ENCODE measurements at regions of chr6 and their contacts with region 1.

Region 1: DNA sequence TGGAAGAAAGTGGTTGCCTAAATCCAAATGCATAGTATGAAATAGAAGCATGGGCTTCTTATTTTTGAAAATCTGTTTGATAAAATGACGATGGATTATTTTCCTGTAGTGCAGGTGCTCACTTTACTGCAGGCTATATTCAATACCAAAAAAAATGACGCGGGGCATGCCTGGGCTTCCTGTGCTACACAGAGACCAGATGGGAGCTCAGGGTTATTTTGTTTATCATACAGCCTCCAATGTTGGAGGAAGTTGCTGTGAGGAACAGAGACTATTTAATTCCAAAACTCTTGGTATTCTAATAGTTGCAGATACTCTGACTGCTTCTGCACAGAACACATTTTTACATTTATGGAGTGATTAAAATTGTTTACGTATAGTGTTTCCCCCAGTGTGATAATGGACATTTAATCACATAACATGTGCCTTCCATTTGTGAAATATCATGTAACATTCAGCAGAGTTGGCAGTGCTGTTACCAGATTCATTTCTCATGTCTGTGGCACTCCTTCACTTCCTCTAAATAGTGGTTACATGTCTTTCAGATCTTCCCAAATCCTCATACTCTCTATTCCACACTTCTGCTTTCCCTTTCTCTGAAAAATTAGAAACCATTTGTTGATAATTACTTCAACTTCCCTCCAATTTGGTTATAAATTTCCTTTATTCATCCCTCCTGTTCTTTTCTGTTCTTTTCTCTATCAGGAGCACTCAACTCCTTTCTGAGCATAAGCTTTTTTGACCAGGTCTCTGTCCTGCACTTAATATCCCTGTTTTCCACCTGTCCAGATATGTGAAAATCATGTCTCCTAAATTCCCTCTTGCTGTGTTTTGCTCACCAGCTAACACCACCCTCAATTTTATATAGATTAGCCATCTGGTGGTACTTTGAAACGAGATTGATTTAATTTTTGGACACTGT is 121.6 kb downstream of the ADGRB3 start:
- H3K4me3 Mint-ChIP-seq: no peak overlapping the region
- H3K27ac Mint-ChIP-seq: no peak overlapping the region
- H3K4me1 Mint-ChIP-seq: peaks cover 30% of the 10 kb centered on the region
- H3K27me3 Mint-ChIP-seq: peaks cover 2% of the 10 kb centered on the region

Region 2: DNA sequence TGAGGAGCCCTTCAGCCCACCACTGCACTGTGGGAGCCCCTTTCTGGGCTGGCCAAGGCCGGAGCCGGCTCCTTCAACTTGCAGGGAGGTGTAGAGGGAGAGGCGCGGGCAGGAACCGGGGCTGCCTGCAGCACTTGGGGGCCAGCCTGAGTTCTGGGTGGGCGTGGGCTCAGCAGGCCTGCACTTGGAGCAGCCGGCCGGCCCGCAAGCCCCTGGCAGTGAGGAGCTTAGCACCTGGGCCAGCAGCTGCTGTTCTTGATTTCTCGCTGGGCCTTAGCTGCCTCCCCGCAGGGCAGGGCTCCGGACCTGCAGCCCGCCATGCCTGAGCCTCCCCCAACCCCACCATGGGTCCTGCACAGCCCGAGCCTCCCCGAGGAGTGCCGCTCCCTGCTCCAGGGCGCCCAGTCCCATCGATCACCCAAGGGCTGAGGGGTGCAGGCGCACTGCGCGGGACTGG is 223.3 kb before region 1 on chr6:
- intact Hi-C with region 1: no loop called
- H3K4me3 Mint-ChIP-seq: no peak overlapping the region
- H3K27ac Mint-ChIP-seq: no peak overlapping the region
- H3K4me1 Mint-ChIP-seq: no peaks in the 10 kb centered on the region
- H3K27me3 Mint-ChIP-seq: no peaks in the 10 kb centered on the region

Region 3: DNA sequence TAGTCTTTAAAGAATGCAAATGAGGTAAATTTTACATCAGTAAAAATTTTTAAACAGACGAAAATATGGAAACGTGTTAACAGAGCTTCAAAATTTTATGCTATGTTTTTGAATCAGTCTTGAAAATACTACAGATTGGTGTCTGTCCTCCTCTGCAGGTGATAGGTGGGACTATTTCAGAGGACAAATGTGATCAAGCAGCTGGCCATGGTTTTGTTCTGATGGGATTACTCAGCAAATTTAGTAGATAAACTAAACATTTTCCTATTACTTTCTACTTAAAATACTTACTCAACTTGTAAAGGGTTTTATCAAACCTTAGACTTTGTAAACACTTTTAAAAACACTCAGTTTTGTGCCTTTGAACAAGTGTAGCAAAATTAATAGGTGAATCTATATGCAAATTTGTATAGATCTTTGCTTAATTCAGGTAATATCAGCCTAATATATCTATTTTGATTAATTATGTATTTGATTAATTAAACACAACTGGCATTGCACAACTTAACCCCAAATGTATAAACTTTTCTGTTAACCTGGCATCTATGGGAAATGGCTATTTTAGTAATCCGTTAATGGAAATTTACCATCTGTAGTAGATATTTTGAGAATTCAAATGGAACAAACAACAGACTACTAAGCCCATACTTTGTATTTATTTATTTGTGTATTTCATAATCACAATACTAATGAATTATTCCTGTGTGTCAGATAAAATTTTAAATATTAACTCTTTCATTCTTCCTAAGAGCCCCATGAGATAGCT is 99.2 kb before region 1 on chr6:
- intact Hi-C with region 1: no loop called
- H3K4me3 Mint-ChIP-seq: no peak overlapping the region
- H3K27ac Mint-ChIP-seq: no peak overlapping the region
- H3K4me1 Mint-ChIP-seq: no peaks in the 10 kb centered on the region
- H3K27me3 Mint-ChIP-seq: no peaks in the 10 kb centered on the region

Region 4: DNA sequence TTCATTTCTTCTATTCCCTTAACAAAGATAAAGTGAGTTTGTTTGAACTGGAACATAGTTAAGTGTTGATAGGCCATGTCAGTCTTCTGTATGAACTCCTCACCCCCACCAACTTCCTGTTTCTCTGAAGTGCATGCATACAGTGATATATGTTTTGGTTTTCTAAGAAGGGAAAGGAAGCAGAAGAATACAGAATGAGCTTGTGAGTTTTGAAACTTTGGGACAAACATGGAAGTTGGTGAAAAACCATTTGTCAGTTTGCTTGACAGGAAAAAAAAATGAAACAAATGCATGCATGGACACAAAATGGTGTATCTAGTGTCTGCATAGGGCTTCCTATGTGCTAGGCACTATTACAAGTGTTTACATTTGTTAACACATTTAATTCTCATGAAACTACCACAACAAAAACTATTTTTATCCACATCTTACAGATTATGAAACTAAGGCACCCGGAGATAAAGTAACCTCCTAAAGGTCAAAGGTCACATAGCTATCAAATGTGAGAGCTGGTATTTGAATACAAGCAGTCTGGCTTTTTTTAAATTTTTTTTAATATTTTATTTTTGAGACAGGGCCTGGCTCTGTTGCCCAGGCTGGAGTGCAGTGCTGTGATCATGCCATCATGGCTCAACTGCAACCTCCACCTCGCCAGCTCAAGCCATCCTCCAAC is 15.8 kb before region 1 on chr6:
- intact Hi-C with region 1: loop called (anchors 2 kb)
- H3K4me3 Mint-ChIP-seq: no peak overlapping the region
- H3K27ac Mint-ChIP-seq: peak overlapping the region; percentile 30
- H3K4me1 Mint-ChIP-seq: peaks cover 20% of the 10 kb centered on the region
- H3K27me3 Mint-ChIP-seq: no peaks in the 10 kb centered on the region